Posterior cingulate gyrus (tissue), 11 donors: ENCODE measurements at regions of chr4 and their contacts with region 1.

Region 1: DNA sequence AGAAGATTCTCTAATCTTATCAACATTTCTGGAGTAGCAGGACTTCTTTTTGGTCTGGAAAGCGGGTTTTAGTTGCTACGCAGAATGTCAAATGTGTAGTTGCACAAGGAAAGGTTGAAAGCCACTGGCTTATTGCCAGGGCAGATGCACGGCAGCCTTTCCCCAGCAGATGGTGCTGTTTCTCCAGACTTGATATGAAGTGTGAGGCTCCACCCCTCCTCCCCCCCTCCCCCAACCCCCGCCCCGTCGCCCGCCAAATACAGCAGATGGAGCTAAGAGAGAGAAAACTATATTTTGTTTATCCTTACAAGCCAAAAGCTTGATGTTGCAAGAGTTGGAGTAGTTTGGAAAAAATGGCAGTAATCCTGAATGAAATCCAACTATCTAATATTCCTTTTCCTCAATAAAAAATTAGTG is 32.0 kb downstream of the ENOPH1 start:
- DNase-seq: peak; percentile 72 to 97 (median 84)

Region 2: DNA sequence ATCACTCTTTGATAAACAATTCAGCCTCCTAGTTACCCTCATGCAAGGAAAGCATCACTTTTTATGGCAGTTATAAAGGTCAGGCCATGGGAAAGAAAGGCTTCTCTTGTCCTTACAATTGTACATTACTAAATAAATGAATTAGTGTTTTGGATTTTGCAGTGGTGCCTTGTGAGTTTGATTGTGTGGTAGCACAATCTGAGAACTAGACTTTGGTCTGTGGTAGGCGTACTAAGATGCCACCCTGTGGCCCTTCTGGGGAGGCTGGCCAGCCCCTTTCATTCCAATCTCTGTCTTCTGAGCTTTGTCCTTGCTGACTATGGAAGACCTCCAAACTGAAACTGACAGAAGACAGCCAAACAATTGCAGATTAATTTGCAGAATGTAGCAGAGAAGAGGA is 74.0 kb before region 1 on chr4:
- intact Hi-C with region 1: no loop called
- DNase-seq: peak in 1 of 10 donors; percentile 29

Region 3: GRCh38 chr4:82739316-82740179 is 277.1 kb after region 1 on chr4:
- intact Hi-C with region 1: loop called (anchors 1 kb)
- DNase-seq: peak; percentile 46 to 96 (median 76)

Region 4: DNA sequence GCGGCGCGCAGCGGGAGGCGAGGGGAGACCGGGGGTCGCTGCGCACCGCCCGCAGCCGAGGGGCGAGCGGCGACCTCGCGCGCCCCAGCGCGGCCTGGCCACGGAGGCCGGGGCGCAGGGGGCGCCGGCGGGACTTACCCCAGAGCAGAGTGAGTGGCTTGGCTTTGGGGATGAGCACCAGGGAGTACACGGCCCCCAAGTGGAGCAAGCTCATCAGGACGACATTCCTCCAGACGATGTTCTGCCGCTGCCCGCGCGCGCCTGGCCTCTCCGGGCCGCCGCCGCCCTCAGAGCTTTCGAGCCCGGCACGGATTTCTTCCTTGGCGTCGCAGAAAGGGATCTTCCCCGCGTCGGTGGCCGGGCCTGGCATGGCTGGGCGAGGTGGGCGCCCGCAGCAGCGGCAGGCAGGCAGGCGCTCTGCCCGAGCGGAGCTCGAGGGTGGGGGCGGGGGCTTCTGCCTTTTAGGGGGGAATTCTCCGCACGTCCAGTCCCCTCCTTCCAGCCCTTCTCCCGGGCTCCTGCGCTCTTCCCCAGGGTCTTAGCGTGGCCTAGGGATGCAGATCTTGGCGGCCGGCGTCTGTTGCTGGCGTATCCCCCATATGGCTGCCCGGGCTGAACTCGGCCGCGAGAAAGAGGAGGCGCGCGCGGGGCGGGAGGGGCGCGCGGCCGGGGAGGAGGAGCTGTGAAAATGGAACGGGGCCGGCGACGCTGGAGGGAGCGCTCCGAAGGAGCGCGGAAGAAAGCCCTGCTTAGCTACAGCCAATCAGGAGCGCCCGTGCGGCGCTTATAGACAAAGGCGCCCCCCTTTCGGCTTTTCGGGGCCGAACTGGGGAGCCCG is 336.0 kb after region 1 on chr4 and contains the start of gene SCD5:
- intact Hi-C with region 1: loop called (anchors 5 kb)
- DNase-seq: peak; percentile 74 to 98 (median 87)

Region 5: GRCh38 chr4:82890901-82891706 is 428.7 kb after region 1 on chr4 and contains the start of gene SEC31A:
- intact Hi-C with region 1: loop called (anchors 5 kb)
- DNase-seq: peak; percentile 91 to 99 (median 94)

Region 6: DNA sequence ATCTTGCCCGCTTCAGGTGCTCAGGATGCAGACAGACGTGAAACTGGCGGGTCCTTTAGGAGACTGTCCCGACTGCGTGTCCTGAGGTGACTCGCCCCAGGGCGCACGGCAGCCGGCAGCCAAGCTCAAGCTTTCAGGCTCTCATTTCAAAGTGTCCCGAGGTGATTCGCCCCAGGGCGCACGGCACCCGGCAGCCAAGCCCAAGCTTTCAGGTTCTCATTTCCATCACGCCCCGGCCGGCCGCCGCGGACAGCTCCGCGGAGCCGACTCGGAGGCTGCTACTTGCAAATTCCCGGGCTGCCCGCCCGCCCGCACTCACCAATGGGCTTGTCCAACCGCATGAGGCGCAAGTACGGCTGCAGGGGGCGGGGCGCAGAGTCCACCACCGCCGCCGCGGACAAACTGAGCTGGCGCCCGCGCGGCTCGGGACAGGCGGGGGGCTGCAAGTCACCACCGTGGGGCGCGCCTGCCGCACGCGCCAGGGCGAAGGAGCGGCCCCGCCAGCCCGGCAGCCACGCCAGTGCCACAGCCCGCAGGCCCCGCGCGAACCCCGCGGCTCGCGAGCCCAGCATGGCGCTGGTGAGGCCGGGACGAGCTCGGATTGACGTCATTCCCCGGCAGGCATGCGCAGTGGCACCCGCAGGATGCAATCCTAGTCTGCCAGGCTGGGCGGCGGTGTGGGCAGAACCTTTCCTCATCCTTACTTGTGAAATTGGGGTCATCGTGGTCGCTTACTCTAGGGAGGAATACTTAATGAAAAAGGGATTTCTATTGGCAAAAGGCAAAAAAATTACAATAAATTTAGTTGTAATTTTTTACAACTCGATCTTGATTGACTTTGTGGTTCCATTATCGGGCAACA is 822.0 kb after region 1 on chr4 and contains the start of gene COQ2:
- intact Hi-C with region 1: loop called (anchors 2 kb)
- DNase-seq: peak; percentile 93 to 99 (median 96)